Activated CD8-positive, alpha-beta T cell treated with anti-CD3 and anti-CD28 coated beads for 36 hours (primary cell): ENCODE measurements at regions of chr12 and their contacts with region 1.

Region 1: DNA sequence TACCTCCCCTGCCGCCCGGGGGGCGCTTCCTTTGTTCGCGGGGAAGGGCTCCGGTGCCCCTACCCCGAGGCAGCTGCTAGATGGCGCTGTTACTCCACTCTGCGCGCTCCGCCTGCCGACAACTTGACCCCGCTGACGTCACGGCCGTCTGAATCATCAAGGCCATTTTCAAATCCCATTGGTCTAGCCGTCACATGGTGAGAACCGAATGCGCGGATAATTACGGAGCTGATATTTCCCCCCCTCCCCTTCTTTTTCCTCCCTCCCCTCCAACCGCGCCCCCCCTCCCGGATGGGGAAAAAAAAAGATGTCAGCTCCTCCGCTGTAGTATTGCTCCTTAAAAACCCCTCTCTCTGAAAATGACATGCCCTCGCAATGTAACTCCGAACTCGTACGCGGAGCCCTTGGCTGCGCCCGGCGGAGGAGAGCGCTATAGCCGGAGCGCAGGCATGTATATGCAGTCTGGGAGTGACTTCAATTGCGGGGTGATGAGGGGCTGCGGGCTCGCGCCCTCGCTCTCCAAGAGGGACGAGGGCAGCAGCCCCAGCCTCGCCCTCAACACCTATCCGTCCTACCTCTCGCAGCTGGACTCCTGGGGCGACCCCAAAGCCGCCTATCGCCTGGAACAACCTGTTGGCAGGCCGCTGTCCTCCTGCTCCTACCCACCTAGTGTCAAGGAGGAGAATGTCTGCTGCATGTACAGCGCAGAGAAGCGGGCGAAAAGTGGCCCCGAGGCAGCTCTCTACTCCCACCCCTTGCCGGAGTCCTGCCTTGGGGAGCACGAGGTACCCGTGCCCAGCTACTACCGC is at the start of gene HOXC10:
- DNase-seq: peak; percentile 97
- ATAC-seq: peak; percentile 83
- H3K4me3 Mint-ChIP-seq: peak within 1 kb of the TSS; percentile 38
- H3K27ac Mint-ChIP-seq: no peak within 1 kb of the TSS
- H3K4me1 Mint-ChIP-seq: peaks cover 27% of the 10 kb centered on the region
- H3K27me3 Mint-ChIP-seq: peaks cover 90% of the 10 kb centered on the region
- CTCF ChIP-seq: peak; percentile 62
- total RNA-seq, gene HOXC10: not detected

Region 2: GRCh38 chr12:53952871-53953734 is 32.0 kb before region 1 on chr12:
- CTCF ChIA-PET with region 1: interaction called, 4 read pairs
- POLR2A ChIA-PET with region 1: interaction called, 4 read pairs
- intact Hi-C with region 1: loop called (anchors 5 kb)
- DNase-seq: no peak
- ATAC-seq: no peak
- H3K4me3 Mint-ChIP-seq: no peak overlapping the region
- H3K27ac Mint-ChIP-seq: no peak overlapping the region
- H3K4me1 Mint-ChIP-seq: peaks cover 17% of the 10 kb centered on the region
- H3K27me3 Mint-ChIP-seq: peaks cover 93% of the 10 kb centered on the region
- CTCF ChIP-seq: no peak

Region 3: DNA sequence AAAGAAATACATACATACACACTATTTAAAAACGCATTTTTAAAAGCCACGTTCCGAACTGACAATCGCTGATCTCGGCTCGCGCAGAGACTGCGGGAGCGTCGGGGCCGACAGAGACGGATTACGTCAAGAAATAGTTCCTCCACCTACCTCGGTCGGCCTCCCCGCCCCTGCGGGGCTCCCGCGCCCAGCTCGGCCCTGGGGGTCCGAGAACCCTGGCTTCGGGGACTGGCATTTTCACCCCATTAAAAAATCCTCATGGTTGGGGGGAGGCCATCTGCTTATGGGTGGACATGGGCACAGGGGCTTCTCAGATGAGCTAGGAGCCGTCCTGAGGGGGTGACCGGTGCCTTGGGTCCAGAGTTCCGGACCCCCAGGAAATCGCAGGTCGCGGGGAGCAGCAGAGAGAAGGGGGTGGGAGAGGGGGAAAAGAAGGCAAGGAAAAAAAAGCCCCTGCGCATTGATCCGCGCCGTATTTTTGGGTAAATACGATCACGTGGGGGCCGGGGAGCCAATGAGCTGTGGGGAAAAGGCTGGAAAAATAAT is 14.5 kb after region 1 on chr12:
- CTCF ChIA-PET with region 1: interaction called, 58 read pairs
- POLR2A ChIA-PET with region 1: interaction called, 9 read pairs
- intact Hi-C with region 1: no loop called
- DNase-seq: peak; percentile 55
- ATAC-seq: no peak
- H3K4me3 Mint-ChIP-seq: peak overlapping the region; percentile 43
- H3K27ac Mint-ChIP-seq: no peak overlapping the region
- H3K4me1 Mint-ChIP-seq: peaks cover 26% of the 10 kb centered on the region
- H3K27me3 Mint-ChIP-seq: peaks cover 85% of the 10 kb centered on the region
- CTCF ChIP-seq: no peak

Region 4: GRCh38 chr12:54017878-54018467 is 32.9 kb after region 1 on chr12:
- CTCF ChIA-PET with region 1: interaction called, 15 read pairs
- POLR2A ChIA-PET with region 1: no interaction called
- intact Hi-C with region 1: no loop called
- DNase-seq: peak; percentile 84
- ATAC-seq: peak; percentile 92
- H3K4me3 Mint-ChIP-seq: peak overlapping the region; percentile 76
- H3K27ac Mint-ChIP-seq: no peak overlapping the region
- H3K4me1 Mint-ChIP-seq: peaks cover 15% of the 10 kb centered on the region
- H3K27me3 Mint-ChIP-seq: peaks cover 67% of the 10 kb centered on the region
- CTCF ChIP-seq: no peak

Region 5: GRCh38 chr12:54201001-54201794 is 216.1 kb after region 1 on chr12:
- CTCF ChIA-PET with region 1: interaction called, 57 read pairs
- POLR2A ChIA-PET with region 1: no interaction called
- intact Hi-C with region 1: no loop called
- DNase-seq: peak; percentile 72
- ATAC-seq: peak; percentile 96
- H3K4me3 Mint-ChIP-seq: no peak overlapping the region
- H3K27ac Mint-ChIP-seq: no peak overlapping the region
- H3K4me1 Mint-ChIP-seq: no peaks in the 10 kb centered on the region
- H3K27me3 Mint-ChIP-seq: peaks cover 52% of the 10 kb centered on the region
- CTCF ChIP-seq: peak; percentile 94

Region 6: DNA sequence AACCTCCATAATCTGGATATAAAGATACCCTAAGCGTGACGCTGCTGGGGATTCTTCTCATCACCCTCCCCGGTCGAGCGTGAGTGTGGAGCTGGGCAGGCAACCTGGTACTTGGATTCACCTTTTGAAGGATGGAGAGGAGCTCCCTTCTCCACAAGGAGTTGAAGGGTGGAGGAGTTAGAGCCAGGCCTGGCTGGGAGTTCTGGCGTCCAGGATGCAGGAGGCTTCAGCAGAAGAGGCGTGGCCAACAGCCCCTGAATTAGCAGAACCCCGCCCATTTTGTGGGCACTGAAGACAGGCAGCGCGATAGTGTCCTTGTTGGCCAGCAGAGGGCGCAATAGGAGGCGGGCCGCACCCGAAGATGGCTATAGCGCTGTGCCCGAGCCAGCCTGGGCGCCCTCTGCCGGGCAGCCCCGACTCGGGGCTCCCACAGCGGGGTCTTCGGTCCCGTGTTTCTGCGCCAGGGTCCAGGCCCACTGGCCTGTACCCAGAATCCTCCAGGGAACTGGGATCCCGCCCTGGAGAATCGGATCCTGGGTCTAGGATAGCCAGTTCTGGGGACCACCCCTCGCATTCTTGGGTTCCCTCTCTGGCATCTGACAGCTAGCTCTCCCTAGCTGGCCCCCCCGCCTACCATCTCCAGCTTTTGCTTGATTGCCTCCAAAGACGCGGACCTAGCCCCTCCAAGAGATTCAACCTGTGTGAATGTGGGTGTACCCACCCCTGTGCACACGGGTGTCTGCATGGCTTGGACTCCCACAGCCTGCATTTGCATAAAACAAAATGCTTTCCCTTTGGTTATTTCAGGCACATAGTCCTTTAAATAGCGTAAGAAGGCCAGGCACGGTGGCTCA is 229.7 kb after region 1 on chr12:
- CTCF ChIA-PET with region 1: interaction called, 57 read pairs
- POLR2A ChIA-PET with region 1: no interaction called
- intact Hi-C with region 1: no loop called
- DNase-seq: peak; percentile 95
- ATAC-seq: peak; percentile 88
- H3K4me3 Mint-ChIP-seq: peak overlapping the region; percentile 76
- H3K27ac Mint-ChIP-seq: no peak overlapping the region
- H3K4me1 Mint-ChIP-seq: peaks cover 21% of the 10 kb centered on the region
- H3K27me3 Mint-ChIP-seq: peaks cover 20% of the 10 kb centered on the region
- CTCF ChIP-seq: peak; percentile 100